Calu3 (cell line): ENCODE measurements at regions of chr14 and their contacts with region 1.

Region 1: DNA sequence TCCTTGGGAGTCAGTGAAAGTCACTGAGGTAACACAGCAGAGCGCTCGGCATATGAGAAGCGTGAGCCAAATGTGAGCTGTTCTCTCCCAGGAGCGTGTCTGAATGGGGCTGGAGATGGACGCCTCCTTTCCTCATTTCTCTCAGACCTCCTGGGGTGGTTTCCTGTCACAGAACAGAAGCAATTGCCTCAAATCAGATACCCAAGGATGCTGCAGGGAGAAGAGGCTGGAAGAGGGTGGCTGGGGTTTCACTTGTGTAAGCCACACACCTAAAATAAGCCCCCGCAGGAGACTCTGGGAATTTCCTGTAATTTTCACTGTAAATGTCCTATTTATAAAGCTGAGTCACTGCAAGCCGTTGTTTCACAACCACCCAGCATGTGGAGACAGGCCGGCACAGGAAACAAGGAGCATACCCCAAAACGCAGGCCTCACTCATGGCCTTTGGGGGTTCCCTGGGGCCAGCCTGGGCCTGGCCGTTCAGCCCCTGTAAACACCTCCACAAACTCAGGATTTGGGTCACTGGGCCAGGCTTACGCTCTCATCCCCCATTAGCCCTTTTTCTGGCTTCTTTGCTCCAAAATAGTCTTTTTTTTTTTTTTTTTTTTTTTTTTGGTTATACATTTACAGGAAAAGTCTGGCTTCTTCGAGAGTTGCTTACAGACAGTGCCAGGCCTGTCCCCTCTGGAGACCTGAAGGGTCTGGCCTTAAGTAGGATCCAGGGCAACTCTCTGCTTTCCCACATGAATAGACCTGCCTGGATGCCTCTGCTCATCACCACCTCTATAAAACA is 55.3 kb downstream of the VCPKMT start:
- DNase-seq: peak; percentile 57
- H3K4me3 Mint-ChIP-seq: no peak overlapping the region
- H3K27ac Mint-ChIP-seq: peak overlapping the region; percentile 91
- H3K4me1 Mint-ChIP-seq: peaks cover 45% of the 10 kb centered on the region
- H3K27me3 Mint-ChIP-seq: no peaks in the 10 kb centered on the region
- CTCF ChIP-seq: no peak

Region 2: DNA sequence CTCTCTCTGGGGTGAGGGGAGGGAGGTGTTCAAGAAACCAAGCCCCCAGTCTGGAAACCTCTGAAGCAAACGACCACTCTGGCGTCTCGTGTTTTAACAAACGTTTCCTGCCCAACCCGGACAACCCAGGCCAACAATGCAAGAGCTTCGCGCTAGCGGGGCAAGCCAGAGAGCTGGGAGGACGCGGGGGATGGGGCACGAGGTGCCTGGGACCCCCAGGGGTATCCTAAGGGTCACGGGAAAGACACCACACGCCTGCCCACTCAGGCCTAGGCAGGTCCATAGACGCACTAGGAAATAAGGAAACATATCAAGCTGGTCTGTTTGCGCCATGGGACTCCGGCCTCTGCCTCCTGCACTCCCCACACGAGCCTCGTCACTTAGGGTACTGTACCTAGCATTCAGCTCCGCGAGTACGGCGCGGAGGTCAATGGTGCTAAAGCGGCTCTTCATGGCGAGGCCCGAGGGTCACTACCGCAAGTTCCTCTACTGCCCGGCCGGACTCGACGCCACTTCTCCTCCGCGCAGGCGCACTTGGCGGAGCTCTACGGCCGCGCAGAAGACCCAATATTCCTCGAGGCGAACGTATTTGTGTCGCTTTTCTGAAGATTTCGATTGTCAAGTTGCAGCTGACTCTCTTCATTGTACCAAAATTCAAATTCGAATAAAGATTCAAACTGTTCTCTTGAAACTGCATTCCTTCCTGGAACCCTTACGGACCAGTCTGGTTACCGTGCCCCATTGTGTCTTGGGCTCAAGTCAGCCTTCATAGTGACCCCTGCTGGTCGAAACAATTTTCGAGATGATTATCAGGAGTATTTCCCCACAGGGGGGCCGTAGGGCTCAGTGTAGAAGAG is 208.5 kb before region 1 on chr14 and contains the start of gene NEMF:
- CTCF ChIA-PET with region 1: interaction called, 14 read pairs
- intact Hi-C with region 1: no loop called
- DNase-seq: peak; percentile 86
- H3K4me3 Mint-ChIP-seq: peak within 1 kb of the TSS; percentile 96
- H3K27ac Mint-ChIP-seq: peak within 1 kb of the TSS; percentile 97
- H3K4me1 Mint-ChIP-seq: peaks cover 25% of the 10 kb centered on the region
- H3K27me3 Mint-ChIP-seq: no peaks in the 10 kb centered on the region
- CTCF ChIP-seq: peak; percentile 84
- total RNA-seq, gene NEMF: 76.3 and 77.7 TPM in 2 replicates

Region 3: GRCh38 chr14:49867831-49868723 is 193.0 kb before region 1 on chr14:
- CTCF ChIA-PET with region 1: interaction called, 5 read pairs
- intact Hi-C with region 1: loop called (anchors 2 kb)
- DNase-seq: peak; percentile 96
- H3K4me3 Mint-ChIP-seq: peak overlapping the region; percentile 82
- H3K27ac Mint-ChIP-seq: peak overlapping the region; percentile 76
- H3K4me1 Mint-ChIP-seq: peaks cover 8% of the 10 kb centered on the region
- H3K27me3 Mint-ChIP-seq: no peaks in the 10 kb centered on the region
- CTCF ChIP-seq: no peak

Region 4: GRCh38 chr14:49892636-49893308 is 168.3 kb before region 1 on chr14 and contains the start of gene ARF6:
- CTCF ChIA-PET with region 1: no interaction called
- intact Hi-C with region 1: loop called (anchors 5 kb)
- DNase-seq: peak; percentile 98
- H3K4me3 Mint-ChIP-seq: peak within 1 kb of the TSS; percentile 87
- H3K27ac Mint-ChIP-seq: peak within 1 kb of the TSS; percentile 97
- H3K4me1 Mint-ChIP-seq: peaks cover 3% of the 10 kb centered on the region
- H3K27me3 Mint-ChIP-seq: no peaks in the 10 kb centered on the region
- CTCF ChIP-seq: no peak
- total RNA-seq, gene ARF6: 74.2 and 81.0 TPM in 2 replicates

Region 5: GRCh38 chr14:49971156-49972130 is 89.6 kb before region 1 on chr14:
- CTCF ChIA-PET with region 1: no interaction called
- intact Hi-C with region 1: loop called (anchors 5 kb)
- DNase-seq: no peak
- H3K4me3 Mint-ChIP-seq: peak overlapping the region; percentile 7
- H3K27ac Mint-ChIP-seq: peak overlapping the region; percentile 85
- H3K4me1 Mint-ChIP-seq: peaks cover 78% of the 10 kb centered on the region
- H3K27me3 Mint-ChIP-seq: no peaks in the 10 kb centered on the region
- CTCF ChIP-seq: no peak

Region 6: DNA sequence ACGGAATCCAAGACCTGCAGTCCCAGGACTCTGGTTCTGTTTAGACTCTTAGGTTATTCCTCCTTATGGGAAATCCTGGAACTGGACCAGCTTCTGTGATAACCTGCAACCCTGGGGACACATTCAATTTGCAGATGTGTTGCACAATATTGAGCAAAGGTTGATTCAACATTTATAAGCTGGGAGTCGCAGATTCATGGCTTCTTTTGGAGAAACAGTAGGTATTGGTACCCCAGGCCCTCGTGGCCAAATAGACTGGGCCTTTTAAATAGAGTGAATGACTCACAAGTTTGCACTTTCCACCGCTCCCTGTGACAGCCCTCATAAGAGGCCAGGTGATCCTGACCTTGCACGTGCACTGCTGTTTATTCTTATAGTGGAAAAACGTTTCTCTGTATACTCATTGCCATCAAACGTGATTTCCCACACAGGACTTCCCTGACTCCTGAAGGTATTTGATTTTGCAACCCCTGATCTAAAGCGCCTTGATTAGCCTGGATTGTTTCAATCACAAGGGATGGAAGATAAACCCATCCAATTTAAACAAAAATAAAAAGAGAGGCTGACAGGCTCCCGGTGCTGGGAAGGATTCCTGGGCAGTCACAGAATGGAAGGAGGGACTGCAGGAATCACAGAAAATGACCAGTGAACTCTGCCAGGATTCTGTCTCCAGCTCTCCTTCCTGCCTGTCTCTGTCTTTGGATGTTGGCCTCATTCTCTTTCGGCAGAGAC is 42.7 kb before region 1 on chr14:
- CTCF ChIA-PET with region 1: no interaction called
- intact Hi-C with region 1: loop called (anchors 5 kb)
- DNase-seq: peak; percentile 65
- H3K4me3 Mint-ChIP-seq: no peak overlapping the region
- H3K27ac Mint-ChIP-seq: peak overlapping the region; percentile 78
- H3K4me1 Mint-ChIP-seq: peaks cover 55% of the 10 kb centered on the region
- H3K27me3 Mint-ChIP-seq: no peaks in the 10 kb centered on the region
- CTCF ChIP-seq: no peak

Region 7: GRCh38 chr14:50101417-50101816 is 40.4 kb after region 1 on chr14:
- CTCF ChIA-PET with region 1: no interaction called
- intact Hi-C with region 1: loop called (anchors 5 kb)
- DNase-seq: no peak
- H3K4me3 Mint-ChIP-seq: no peak overlapping the region
- H3K27ac Mint-ChIP-seq: peak overlapping the region; percentile 67
- H3K4me1 Mint-ChIP-seq: peaks cover 30% of the 10 kb centered on the region
- H3K27me3 Mint-ChIP-seq: no peaks in the 10 kb centered on the region
- CTCF ChIP-seq: no peak